ENCODE measurements at regions of chr3 and their contacts with region 1.

Region 1: GRCh38 chr3:188286087-188286513 is 132.1 kb downstream of the LPP start:
- DNase-seq: peak; percentile 29
- ATAC-seq: no peak
- H3K4me3 Mint-ChIP-seq: no peak overlapping the region
- H3K27ac Mint-ChIP-seq: peak overlapping the region; percentile 72
- H3K4me1 Mint-ChIP-seq: peaks cover 55% of the 10 kb centered on the region
- H3K27me3 Mint-ChIP-seq: no peaks in the 10 kb centered on the region

Region 2: DNA sequence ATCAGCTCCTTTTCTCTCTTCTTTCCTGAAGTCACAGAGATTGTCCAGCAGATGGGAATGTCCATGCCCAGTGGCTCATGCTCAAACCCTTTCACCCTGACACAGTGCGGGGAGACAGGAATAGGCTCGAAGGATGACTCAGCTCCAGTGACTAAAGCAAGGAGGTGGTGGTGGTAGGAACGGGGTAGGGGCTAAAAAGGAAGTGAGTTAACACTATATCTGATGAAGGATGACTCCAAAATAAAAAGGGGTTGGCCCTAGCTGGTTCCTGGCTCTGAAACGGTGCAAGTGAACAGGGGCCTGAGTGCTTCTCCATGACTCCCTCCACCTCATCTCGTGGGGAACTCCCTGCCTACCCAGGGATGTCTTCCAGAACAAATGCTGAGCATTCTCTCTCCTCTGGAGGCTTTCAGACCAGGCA is 299.6 kb before region 1 on chr3:
- CTCF ChIA-PET with region 1: no interaction called
- POLR2A ChIA-PET with region 1: no interaction called
- intact Hi-C with region 1: loop called in 1 of 2 experiments (anchors 5 kb)
- DNase-seq: peak; percentile 67
- ATAC-seq: peak; percentile 91
- H3K4me3 Mint-ChIP-seq: no peak overlapping the region
- H3K27ac Mint-ChIP-seq: peak overlapping the region; percentile 49
- H3K4me1 Mint-ChIP-seq: peaks cover 36% of the 10 kb centered on the region
- H3K27me3 Mint-ChIP-seq: no peaks in the 10 kb centered on the region

Region 3: GRCh38 chr3:188154014-188154808 is 131.9 kb before region 1 on chr3 and contains the start of gene LPP:
- CTCF ChIA-PET with region 1: interaction called, 5 read pairs
- POLR2A ChIA-PET with region 1: no interaction called
- intact Hi-C with region 1: loop called in 1 of 2 experiments (anchors 2 kb)
- DNase-seq: peak; percentile 91
- ATAC-seq: peak; percentile 76
- H3K4me3 Mint-ChIP-seq: peak within 1 kb of the TSS; percentile 76
- H3K27ac Mint-ChIP-seq: peak within 1 kb of the TSS; percentile 95
- H3K4me1 Mint-ChIP-seq: peaks cover 64% of the 10 kb centered on the region
- H3K27me3 Mint-ChIP-seq: peaks cover 3% of the 10 kb centered on the region
- total RNA-seq, gene LPP: 34.7 to 40.6 TPM

Region 4: DNA sequence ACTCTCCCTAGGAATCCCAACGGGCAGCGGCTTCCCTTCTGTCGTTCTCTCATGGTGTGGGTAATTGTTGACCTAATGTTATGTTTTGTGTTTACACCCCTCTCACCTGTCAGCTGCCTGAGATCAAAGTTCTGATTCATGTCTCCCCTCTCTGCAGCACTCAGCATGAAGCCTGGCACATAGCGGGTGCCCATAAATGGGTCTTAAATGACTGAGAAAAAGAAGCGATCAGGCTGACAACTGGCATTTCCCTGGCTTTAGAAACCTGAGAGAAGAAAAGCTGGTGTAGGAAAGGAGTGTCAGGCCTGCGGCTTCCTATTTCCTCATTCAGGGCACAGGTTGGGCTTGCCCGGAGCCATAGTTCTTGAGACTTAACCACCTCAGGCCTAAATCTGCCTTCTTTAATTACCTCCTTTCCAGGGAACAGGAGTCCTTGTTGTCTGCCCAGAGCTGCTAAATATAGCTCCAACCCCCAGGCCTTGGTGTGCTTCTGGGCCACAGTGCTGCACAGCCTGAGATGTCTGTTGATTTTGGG is 100.3 kb before region 1 on chr3:
- CTCF ChIA-PET with region 1: no interaction called
- POLR2A ChIA-PET with region 1: no interaction called
- intact Hi-C with region 1: no loop called
- DNase-seq: peak; percentile 33
- ATAC-seq: peak; percentile 60
- H3K4me3 Mint-ChIP-seq: no peak overlapping the region
- H3K27ac Mint-ChIP-seq: no peak overlapping the region
- H3K4me1 Mint-ChIP-seq: peaks cover 47% of the 10 kb centered on the region
- H3K27me3 Mint-ChIP-seq: no peaks in the 10 kb centered on the region

Region 5: DNA sequence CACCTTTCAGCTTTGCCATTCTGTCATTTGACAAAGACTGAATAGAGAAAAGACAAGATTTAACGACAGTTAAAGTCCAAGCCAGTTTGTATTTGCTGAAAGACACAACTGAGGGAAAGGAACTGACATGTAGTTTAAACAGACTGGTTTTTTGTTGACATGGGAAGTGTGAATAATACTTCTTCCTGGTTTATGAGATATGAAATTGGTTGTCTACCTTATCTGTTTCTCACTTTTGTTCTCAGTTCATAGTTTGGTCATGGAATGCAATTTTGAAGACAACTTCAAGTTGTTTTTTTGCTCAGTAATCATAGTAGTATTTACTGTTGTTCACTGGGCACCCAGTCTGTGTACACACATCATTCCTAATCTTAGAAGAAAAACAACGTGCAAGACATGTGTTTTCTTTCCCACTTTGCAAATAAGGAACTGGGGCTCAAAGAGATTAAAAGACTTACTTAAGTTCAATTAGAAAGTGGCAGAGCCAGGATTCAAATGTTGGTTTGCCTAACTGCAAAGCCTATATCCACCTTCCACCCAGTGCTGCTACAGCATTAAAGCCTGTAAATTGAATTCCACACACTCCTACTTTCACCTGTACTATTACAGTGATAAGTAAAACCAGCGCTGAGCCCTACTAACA is 28.6 kb before region 1 on chr3:
- CTCF ChIA-PET with region 1: interaction called, 19 read pairs
- POLR2A ChIA-PET with region 1: interaction called, 9 read pairs
- intact Hi-C with region 1: loop called (anchors 1 kb)
- DNase-seq: no peak
- ATAC-seq: peak; percentile 12
- H3K4me3 Mint-ChIP-seq: no peak overlapping the region
- H3K27ac Mint-ChIP-seq: peak overlapping the region; percentile 62
- H3K4me1 Mint-ChIP-seq: peaks cover 46% of the 10 kb centered on the region
- H3K27me3 Mint-ChIP-seq: no peaks in the 10 kb centered on the region

Region 6: GRCh38 chr3:188320757-188321156 is 34.7 kb after region 1 on chr3:
- CTCF ChIA-PET with region 1: no interaction called
- POLR2A ChIA-PET with region 1: interaction called, 6 read pairs
- intact Hi-C with region 1: loop called (anchors 1 kb)
- DNase-seq: no peak
- ATAC-seq: no peak
- H3K4me3 Mint-ChIP-seq: no peak overlapping the region
- H3K27ac Mint-ChIP-seq: no peak overlapping the region
- H3K4me1 Mint-ChIP-seq: peaks cover 63% of the 10 kb centered on the region
- H3K27me3 Mint-ChIP-seq: peaks cover 3% of the 10 kb centered on the region

Region 7: GRCh38 chr3:188362405-188362831 is 76.3 kb after region 1 on chr3:
- CTCF ChIA-PET with region 1: no interaction called
- POLR2A ChIA-PET with region 1: no interaction called
- intact Hi-C with region 1: no loop called
- DNase-seq: no peak
- ATAC-seq: peak; percentile 24
- H3K4me3 Mint-ChIP-seq: no peak overlapping the region
- H3K27ac Mint-ChIP-seq: no peak overlapping the region
- H3K4me1 Mint-ChIP-seq: peaks cover 43% of the 10 kb centered on the region
- H3K27me3 Mint-ChIP-seq: no peaks in the 10 kb centered on the region